Activated B cell treated with CpG ODN at 0.5 μM for 24 hours (primary cell): ENCODE measurements at regions of chr12 and their contacts with region 1.

Region 1: GRCh38 chr12:6890789-6891645 is 13.6 kb upstream of the LRRC23 start:
- DNase-seq: peak; percentile 97
- ATAC-seq: peak; percentile 93
- H3K4me3 Mint-ChIP-seq: peak overlapping the region; percentile 84
- H3K27ac Mint-ChIP-seq: peak overlapping the region; percentile 93
- H3K4me1 Mint-ChIP-seq: peaks cover 15% of the 10 kb centered on the region
- H3K27me3 Mint-ChIP-seq: no peaks in the 10 kb centered on the region
- CTCF ChIP-seq: peak; percentile 65

Region 2: DNA sequence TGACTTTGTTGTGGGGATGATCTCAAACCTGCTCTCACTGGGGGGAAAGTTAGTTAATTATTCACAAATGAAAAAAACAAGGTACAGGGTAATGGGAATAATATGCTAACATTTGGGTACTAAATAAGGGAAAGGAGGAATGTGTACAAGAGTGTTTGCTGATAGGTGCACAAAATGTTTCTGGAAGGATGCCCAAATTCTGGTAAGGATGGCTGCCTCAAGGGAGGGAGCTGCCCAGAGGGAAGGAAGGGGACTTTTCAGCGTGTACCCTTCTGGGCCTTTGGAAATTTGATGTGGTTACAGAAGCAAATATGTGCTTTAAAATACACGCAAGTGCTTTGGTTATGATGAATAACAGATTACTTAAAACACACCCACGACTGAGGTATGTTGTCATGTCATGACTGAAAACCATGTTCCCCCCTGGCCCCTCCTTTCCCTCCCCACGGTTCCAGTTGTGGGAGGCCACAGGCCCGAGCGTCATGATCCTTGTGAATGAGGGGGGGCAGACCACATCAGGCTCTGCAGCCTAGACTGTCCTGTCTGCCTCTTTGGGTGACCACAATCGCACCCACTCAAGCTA is 623.8 kb before region 1 on chr12:
- CTCF ChIA-PET with region 1: no interaction called
- POLR2A ChIA-PET with region 1: no interaction called
- intact Hi-C with region 1: no loop called
- DNase-seq: no peak
- ATAC-seq: no peak
- H3K4me3 Mint-ChIP-seq: no peak overlapping the region
- H3K27ac Mint-ChIP-seq: no peak overlapping the region
- H3K4me1 Mint-ChIP-seq: no peaks in the 10 kb centered on the region
- H3K27me3 Mint-ChIP-seq: peaks cover 7% of the 10 kb centered on the region
- CTCF ChIP-seq: no peak

Region 3: GRCh38 chr12:6697584-6698351 is 193.2 kb before region 1 on chr12:
- CTCF ChIA-PET with region 1: no interaction called
- POLR2A ChIA-PET with region 1: no interaction called
- intact Hi-C with region 1: no loop called
- DNase-seq: no peak
- ATAC-seq: no peak
- H3K4me3 Mint-ChIP-seq: peak overlapping the region; percentile 42
- H3K27ac Mint-ChIP-seq: peak overlapping the region; percentile 74
- H3K4me1 Mint-ChIP-seq: peaks cover 60% of the 10 kb centered on the region
- H3K27me3 Mint-ChIP-seq: peaks cover 18% of the 10 kb centered on the region
- CTCF ChIP-seq: no peak

Region 4: DNA sequence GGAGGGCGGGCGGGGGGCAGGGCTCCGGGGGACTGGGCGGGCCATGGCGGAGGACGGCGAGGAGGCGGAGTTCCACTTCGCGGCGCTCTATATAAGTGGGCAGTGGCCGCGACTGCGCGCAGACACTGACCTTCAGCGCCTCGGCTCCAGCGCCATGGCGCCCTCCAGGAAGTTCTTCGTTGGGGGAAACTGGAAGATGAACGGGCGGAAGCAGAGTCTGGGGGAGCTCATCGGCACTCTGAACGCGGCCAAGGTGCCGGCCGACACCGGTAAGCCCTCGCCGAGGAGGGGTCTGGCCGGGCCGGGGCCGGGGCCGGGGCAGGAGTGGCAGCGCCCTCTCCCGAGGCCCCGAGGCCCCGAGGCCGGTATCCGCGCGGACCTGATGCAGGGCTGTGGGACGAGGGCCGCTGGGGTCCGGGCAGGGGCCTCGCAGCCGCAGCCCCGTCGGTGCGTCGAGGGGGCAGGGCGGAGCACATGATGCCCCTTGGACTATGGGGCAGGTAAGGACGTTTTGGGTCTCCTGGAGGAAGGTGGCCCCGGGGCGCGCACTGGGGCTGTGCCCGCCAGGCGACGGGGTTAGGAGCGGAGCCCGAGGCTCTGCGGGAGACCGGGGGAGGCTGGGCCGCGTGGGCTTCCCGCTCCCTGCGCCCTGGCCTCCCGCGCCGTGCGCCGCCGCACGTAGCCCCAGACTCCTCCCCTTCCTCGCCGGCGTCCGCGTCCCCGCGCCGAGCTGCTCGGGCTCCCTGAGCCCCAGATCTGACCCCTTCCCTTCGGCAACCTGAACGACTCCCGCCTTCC is 23.4 kb before region 1 on chr12 and contains the start of gene TPI1:
- CTCF ChIA-PET with region 1: interaction called, 52 read pairs
- POLR2A ChIA-PET with region 1: interaction called, 64 read pairs
- intact Hi-C with region 1: no loop called
- DNase-seq: peak; percentile 65
- ATAC-seq: peak; percentile 78
- H3K4me3 Mint-ChIP-seq: peak within 1 kb of the TSS; percentile 89
- H3K27ac Mint-ChIP-seq: peak within 1 kb of the TSS; percentile 84
- H3K4me1 Mint-ChIP-seq: peaks cover 51% of the 10 kb centered on the region
- H3K27me3 Mint-ChIP-seq: no peaks in the 10 kb centered on the region
- CTCF ChIP-seq: no peak
- total RNA-seq, gene TPI1: 306 and 318 TPM in 2 replicates

Region 5: DNA sequence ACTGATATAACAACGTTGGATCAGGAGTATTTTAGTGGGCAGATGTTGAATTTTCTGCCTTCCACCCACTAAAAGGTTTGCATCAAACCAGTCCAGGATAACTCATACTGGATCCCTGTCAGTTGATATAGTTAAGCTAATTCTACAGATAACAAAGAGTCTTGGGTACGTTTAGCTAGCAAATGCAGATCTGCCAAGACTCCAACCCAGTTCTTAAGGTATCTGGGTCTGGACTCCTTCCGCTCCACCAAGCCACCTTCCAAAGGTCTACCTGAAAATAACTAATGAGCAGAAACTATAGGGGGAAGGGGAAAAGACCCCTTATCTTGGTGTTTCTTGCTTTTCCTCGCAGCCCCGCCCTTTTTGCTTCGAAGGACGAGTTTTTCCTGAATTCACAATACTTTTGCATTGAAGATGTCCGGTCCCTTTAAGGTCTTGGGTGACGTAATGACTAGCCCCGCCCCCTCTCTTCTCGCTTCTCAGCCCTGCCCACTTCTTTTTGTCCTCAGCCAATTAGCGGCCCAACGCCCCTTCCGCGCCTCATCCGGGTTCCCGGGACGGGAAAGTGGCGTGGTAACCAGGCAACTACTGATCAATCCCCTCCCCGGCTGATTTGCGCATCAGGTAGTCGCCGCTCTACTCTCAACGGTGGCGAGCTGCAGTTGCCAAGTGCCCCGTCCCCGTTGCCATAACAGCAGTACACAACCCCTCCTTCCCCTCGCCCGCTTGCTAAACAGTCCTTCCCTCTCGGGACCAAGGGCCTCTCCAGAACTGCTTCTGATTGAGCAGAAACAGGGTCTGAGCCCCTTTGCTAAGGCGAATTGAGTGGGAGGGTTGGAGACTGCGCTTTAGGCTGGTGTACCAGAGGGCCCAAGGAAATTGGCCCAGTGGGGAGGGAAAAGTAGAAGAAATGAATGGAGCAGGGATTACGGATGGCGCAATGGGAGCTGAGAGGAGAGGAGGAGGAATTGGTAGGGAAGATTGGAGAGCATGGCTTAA is 13.6 kb after region 1 on chr12 and contains the start of gene LRRC23:
- CTCF ChIA-PET with region 1: interaction called, 4 read pairs
- POLR2A ChIA-PET with region 1: interaction called, 19 read pairs
- intact Hi-C with region 1: loop called (anchors 1 kb)
- DNase-seq: peak; percentile 87
- ATAC-seq: peak; percentile 98
- H3K4me3 Mint-ChIP-seq: no peak within 1 kb of the TSS
- H3K27ac Mint-ChIP-seq: no peak within 1 kb of the TSS
- H3K4me1 Mint-ChIP-seq: peaks cover 6% of the 10 kb centered on the region
- H3K27me3 Mint-ChIP-seq: no peaks in the 10 kb centered on the region
- CTCF ChIP-seq: no peak
- total RNA-seq, gene LRRC23: 7.7 and 8.8 TPM in 2 replicates

Region 6: GRCh38 chr12:6921996-6922946 is 31.3 kb after region 1 on chr12:
- CTCF ChIA-PET with region 1: interaction called, 4 read pairs
- POLR2A ChIA-PET with region 1: interaction called, 13 read pairs
- intact Hi-C with region 1: loop called (anchors 1 kb)
- DNase-seq: no peak
- ATAC-seq: peak; percentile 49
- H3K4me3 Mint-ChIP-seq: peak overlapping the region; percentile 9
- H3K27ac Mint-ChIP-seq: peak overlapping the region; percentile 78
- H3K4me1 Mint-ChIP-seq: peaks cover 50% of the 10 kb centered on the region
- H3K27me3 Mint-ChIP-seq: no peaks in the 10 kb centered on the region
- CTCF ChIP-seq: no peak

Region 7: DNA sequence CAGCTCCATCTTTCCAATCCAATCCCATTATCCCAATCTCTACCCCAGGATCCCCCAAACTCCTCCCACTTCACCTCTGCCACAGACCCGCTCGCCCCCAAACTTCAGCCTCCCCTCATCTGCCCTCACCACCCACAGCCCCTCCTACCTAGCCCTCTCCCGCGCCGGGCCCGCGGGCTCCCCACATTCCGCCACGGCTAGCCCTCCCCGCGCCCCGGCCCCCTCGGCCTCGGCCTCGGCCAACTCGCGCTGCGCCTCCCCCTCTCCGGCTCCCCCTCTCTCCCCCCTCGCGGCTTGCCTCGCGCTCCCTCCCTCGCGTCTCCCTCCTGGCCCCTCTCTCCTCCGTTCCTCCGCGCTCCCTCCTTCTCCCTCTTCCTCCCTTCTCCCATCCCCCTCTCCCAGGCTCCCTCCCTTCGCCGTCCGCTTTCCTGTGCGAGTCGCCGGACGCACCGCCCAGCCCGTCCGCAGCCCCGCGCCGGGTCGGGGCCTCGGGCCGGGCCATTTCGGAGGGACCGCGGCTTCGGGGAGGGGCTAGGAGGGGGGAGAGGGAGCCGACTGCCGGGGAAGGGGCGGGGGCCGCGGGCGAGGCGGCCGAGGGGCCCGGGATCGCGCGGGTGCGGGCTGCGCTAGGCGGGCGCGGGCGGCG is 36.5 kb after region 1 on chr12 and contains the start of gene ATN1:
- CTCF ChIA-PET with region 1: interaction called, 3 read pairs
- POLR2A ChIA-PET with region 1: interaction called, 13 read pairs
- intact Hi-C with region 1: loop called (anchors 1 kb)
- DNase-seq: peak; percentile 58
- ATAC-seq: peak; percentile 42
- H3K4me3 Mint-ChIP-seq: peak within 1 kb of the TSS; percentile 86
- H3K27ac Mint-ChIP-seq: peak within 1 kb of the TSS; percentile 86
- H3K4me1 Mint-ChIP-seq: peaks cover 54% of the 10 kb centered on the region
- H3K27me3 Mint-ChIP-seq: no peaks in the 10 kb centered on the region
- CTCF ChIP-seq: no peak
- total RNA-seq, gene ATN1: 42.8 and 50.9 TPM in 2 replicates

Region 8: DNA sequence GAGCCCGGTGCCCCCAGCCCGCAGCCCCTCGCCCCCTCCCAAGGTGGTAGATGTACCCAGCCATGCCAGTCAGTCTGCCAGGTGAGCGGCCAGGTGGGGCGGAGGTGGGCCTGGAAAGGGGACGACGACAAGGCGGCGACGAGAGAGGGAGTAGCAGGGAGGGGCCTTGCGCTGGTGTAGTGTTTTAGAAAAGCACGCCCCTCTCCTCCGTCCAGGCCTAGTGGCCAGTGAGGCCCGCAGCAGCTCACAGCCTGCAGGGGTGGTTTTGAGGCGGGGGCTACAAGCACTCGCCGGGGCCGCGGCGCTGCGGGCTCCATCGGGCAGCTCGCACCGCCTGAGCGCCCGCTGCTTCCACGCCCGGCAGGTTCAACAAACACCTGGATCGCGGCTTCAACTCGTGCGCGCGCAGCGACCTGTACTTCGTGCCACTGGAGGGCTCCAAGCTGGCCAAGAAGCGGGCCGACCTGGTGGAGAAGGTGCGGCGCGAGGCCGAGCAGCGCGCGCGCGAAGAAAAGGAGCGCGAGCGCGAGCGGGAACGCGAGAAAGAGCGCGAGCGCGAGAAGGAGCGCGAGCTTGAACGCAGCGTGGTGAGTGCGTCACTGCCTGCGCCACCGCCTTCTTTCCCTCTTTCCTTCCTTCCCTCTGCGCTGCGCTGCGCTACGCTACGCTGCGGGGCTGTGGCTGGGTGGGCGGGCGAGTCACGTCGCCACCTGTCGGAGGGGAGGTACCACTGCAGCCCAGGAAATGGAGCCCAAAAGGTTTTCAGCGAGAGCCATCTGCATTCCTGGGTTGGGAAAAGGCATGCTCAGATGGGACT is 46.7 kb after region 1 on chr12:
- CTCF ChIA-PET with region 1: interaction called, 9 read pairs
- POLR2A ChIA-PET with region 1: interaction called, 20 read pairs
- intact Hi-C with region 1: loop called (anchors 1 kb)
- DNase-seq: peak; percentile 84
- ATAC-seq: peak; percentile 92
- H3K4me3 Mint-ChIP-seq: peak overlapping the region; percentile 84
- H3K27ac Mint-ChIP-seq: peak overlapping the region; percentile 91
- H3K4me1 Mint-ChIP-seq: peaks cover 35% of the 10 kb centered on the region
- H3K27me3 Mint-ChIP-seq: no peaks in the 10 kb centered on the region
- CTCF ChIP-seq: no peak

Region 9: DNA sequence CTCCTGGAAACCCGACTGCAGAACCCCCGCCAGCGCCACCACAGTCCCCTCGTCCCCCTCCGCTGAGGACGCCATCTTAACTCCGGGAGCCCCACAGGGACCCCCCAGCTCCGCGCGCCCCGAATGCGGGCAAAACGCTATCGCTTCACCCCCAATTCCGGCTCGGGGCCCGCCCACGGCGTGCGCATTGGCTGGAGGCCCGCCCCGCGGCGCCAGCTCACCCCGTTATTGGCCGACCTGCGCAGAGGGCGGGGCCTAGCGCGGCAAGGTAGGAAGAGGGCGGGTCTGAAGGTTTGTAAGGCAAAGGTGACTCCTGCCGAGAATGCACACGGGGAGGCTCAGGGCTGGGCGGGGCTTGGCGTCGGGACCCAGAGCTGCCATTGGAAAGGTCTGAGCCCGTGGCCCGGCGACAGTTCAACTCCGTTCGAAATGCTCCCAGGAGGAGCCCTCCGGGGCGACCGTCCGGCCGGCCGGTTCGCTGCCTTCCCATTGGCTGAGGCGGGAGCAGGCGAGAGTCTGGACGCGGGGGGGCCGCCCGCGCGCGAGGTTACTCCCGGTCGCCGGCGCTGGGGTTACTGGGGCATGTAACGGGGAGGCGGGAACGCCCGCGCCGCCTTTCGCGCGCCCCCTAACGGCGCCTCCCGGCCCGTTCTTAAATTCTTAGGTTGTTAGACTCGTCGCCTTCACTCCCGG is 127.5 kb after region 1 on chr12 and contains the start of gene LPCAT3:
- CTCF ChIA-PET with region 1: no interaction called
- POLR2A ChIA-PET with region 1: interaction called, 4 read pairs
- intact Hi-C with region 1: loop called (anchors 1 kb)
- DNase-seq: peak; percentile 94
- ATAC-seq: peak; percentile 96
- H3K4me3 Mint-ChIP-seq: peak within 1 kb of the TSS; percentile 87
- H3K27ac Mint-ChIP-seq: peak within 1 kb of the TSS; percentile 77
- H3K4me1 Mint-ChIP-seq: peaks cover 20% of the 10 kb centered on the region
- H3K27me3 Mint-ChIP-seq: no peaks in the 10 kb centered on the region
- CTCF ChIP-seq: no peak
- total RNA-seq, gene LPCAT3: 19.3 and 21.3 TPM in 2 replicates